IMR-90 (cell line): ENCODE measurements at regions of chr16 and their contacts with region 1.

Region 1: GRCh38 chr16:55944377-55944802 is 69.2 kb upstream of the CES5A start:
- DNase-seq: peak; percentile 55
- ATAC-seq: peak; percentile 98
- H3K4me3 ChIP-seq: no peak overlapping the region
- H3K27ac ChIP-seq: no peak overlapping the region
- H3K4me1 ChIP-seq: no peaks in the 10 kb centered on the region
- H3K27me3 ChIP-seq: no peaks in the 10 kb centered on the region
- CTCF ChIP-seq: peak; percentile 88
- POLR2A ChIP-seq: no peak
- RAD21 ChIP-seq: peak; percentile 80

Region 2: DNA sequence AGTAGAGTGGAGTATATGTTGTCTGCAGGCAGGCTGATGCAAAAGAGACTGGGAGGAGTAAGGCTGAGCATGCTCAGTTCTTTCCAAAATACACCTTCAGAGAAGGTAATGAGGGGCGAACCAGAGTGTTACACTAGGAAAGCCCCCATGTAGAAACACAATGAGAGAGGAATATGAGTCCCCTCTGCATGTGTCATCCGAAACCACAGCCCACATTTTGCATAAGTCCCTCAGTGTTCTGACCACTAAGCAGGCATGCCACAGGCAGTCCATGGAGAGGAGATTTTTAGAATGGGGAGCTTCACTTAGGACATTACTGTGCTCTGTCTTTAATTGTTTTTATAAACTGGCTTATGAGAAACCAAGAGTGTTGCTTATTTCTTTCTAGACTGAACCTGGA is 256.6 kb before region 1 on chr16:
- CTCF ChIA-PET with region 1: no interaction called
- POLR2A ChIA-PET with region 1: no interaction called
- dilution Hi-C with region 1: no loop called
- in situ Hi-C with region 1: no loop called
- intact Hi-C with region 1: no loop called
- DNase-seq: no peak
- ATAC-seq: no peak
- H3K4me3 ChIP-seq: no peak overlapping the region
- H3K27ac ChIP-seq: no peak overlapping the region
- H3K4me1 ChIP-seq: no peaks in the 10 kb centered on the region
- H3K27me3 ChIP-seq: no peaks in the 10 kb centered on the region
- CTCF ChIP-seq: no peak
- POLR2A ChIP-seq: no peak
- RAD21 ChIP-seq: no peak

Region 3: DNA sequence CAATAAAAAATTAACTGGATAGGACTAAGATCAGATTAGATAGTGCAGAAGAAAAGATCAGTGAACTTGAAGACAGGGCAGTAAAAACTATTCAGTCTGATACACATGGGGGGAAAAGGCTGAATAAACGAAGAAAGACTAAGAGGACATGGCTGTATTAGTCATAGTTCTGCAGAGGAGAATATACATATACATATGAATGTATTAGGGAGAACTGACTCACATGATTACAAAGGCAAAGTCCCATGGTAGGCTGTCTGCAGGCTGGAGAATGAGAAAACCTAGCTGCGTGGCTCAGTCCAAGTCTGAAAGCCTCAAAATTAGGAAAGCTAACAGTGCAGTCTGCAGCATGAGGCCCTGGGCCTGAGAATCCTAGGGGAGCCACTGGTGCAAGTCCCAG is 148.7 kb after region 1 on chr16:
- CTCF ChIA-PET with region 1: no interaction called
- POLR2A ChIA-PET with region 1: no interaction called
- dilution Hi-C with region 1: no loop called
- in situ Hi-C with region 1: no loop called
- intact Hi-C with region 1: no loop called
- DNase-seq: no peak
- ATAC-seq: no peak
- H3K4me3 ChIP-seq: no peak overlapping the region
- H3K27ac ChIP-seq: no peak overlapping the region
- H3K4me1 ChIP-seq: no peaks in the 10 kb centered on the region
- H3K27me3 ChIP-seq: no peaks in the 10 kb centered on the region
- CTCF ChIP-seq: no peak
- POLR2A ChIP-seq: no peak
- RAD21 ChIP-seq: no peak

Region 4: GRCh38 chr16:56708525-56709442 is 764.4 kb after region 1 on chr16:
- CTCF ChIA-PET with region 1: no interaction called
- POLR2A ChIA-PET with region 1: no interaction called
- dilution Hi-C with region 1: no loop called
- in situ Hi-C with region 1: loop called (anchors 25 kb)
- intact Hi-C with region 1: loop called (anchors 5 kb)
- DNase-seq: no peak
- ATAC-seq: no peak
- H3K4me3 ChIP-seq: no peak overlapping the region
- H3K27ac ChIP-seq: no peak overlapping the region
- H3K4me1 ChIP-seq: no peaks in the 10 kb centered on the region
- H3K27me3 ChIP-seq: peaks cover 20% of the 10 kb centered on the region
- CTCF ChIP-seq: no peak
- POLR2A ChIP-seq: no peak
- RAD21 ChIP-seq: no peak